PC-9 (cell line): ENCODE measurements at regions of chr15 and their contacts with region 1.

Region 1: DNA sequence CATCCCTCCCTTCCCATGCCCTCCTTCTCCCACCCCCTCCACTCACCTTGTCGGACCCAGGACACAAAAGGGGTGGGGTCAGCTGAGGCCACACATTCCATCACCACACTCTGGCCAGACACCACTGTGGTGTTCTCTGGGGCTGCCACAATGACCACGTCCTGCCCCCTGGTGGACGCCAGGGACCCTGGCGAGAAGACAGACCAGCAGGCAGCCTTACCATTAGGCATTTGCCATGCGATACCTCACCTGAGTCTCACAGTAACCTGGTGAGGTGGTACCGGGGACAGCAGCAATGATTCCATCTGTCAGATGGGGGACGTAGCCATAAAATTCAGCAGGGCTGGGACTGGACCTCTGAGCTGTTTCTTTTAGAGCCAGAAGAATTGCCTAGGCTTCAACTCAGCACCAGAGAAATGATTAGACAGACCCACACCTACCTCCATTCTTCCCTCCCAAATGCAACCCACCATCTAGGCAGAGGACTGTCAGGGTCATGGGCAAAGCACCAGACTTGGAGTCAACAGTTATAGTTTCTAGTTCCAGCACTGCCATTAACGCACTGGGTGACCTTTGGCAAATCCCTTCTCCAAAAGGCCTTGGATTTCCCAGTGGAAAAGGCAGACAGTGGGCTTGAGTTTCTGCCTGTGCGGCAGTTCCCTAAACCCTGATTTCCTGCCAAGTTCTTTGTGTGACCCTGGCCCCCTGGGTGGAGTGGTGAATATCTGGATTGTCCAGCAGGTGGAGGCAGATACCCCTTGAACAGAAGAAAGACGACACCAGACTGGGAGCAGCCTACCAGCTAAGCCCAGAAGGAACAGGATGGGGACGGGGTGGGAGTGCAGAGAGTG is 21.8 kb downstream of the IGDCC4 start:
- DNase-seq: peak in 1 of 2 experiments; percentile 60
- H3K4me3 ChIP-seq: no peak overlapping the region
- H3K27ac ChIP-seq: no peak overlapping the region
- H3K4me1 ChIP-seq: no peaks in the 10 kb centered on the region
- H3K27me3 ChIP-seq: no peaks in the 10 kb centered on the region
- CTCF ChIP-seq: peak; percentile 70

Region 2: DNA sequence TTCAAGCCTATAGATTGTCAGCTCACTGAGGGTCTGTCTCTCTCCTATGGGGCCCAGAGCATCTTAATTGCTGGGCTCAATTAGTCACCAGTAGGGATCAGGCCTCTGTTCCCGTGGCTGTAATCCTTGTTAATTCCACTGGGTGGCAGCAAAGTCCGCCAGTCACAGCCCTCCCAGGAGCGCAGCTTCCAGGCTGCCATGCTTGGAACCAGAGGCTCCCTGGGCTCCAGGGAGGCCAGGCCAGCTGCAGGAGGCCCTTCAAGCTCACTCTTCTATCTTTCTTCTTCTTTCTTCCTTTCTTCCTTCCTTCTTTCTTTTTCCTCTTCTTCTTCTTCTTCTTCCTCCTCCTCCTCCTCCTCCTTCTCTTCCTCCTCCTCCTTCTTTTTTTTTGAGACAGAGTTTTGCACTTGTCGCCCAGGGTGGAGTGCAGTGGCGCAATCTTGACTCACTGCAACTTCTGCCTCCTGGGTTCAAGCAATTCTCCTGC is 82.1 kb before region 1 on chr15:
- CTCF ChIA-PET with region 1: no interaction called
- POLR2A ChIA-PET with region 1: interaction called, 3 read pairs
- intact Hi-C with region 1: loop called (anchors 1 kb)
- DNase-seq: peak; percentile 49 to 80
- H3K4me3 ChIP-seq: no peak overlapping the region
- H3K27ac ChIP-seq: no peak overlapping the region
- H3K4me1 ChIP-seq: no peaks in the 10 kb centered on the region
- H3K27me3 ChIP-seq: no peaks in the 10 kb centered on the region
- CTCF ChIP-seq: peak; percentile 88